PC-3 (cell line): ENCODE measurements at regions of chr11 and their contacts with region 1.

Region 1: DNA sequence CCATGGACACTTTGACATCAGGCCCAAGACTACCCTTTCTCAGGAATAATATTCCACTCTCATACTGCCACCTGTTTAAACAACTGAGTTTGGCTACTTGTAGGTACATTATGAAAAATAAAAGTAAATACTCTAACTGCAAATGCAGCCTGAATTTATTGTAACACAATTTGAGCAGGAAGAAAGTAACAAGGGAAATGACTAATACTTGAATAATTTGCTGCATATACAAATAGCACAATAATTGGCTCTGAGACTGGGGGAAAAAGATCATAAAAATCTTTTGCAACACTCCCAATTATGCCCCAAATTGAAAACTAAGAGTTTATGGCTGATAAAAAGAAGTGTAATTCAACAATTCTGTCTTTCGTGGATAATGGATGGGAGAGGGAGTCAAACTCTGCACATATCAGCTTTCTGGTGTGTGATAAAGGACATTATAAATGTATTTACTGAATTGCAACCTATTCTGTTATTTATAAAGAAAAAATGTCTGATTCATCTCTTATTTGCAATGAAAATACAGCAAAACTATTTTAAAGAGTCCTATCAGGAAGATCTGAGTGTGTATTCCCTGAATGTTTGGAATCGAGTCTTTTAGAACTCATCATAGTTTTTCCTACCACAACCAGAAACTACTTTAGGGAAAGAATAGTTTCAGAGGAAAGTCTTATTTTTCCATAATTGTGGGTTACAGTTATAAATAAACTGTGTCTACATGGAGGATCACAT is 359.0 kb downstream of the JRKL start:
- DNase-seq: peak; percentile 88
- ATAC-seq: peak; percentile 90
- H3K4me3 ChIP-seq: peak overlapping the region; percentile 52
- H3K27ac ChIP-seq: peak overlapping the region; percentile 76
- H3K4me1 ChIP-seq: peaks cover 27% of the 10 kb centered on the region
- H3K27me3 ChIP-seq: no peaks in the 10 kb centered on the region
- CTCF ChIP-seq: no peak; the same call in 1 of the 2 replicates

Region 2: GRCh38 chr11:96680211-96681018 is 68.4 kb before region 1 on chr11:
- CTCF ChIA-PET with region 1: no interaction called
- POLR2A ChIA-PET with region 1: no interaction called
- intact Hi-C with region 1: loop called (anchors 1 kb)
- DNase-seq: peak; percentile 49
- ATAC-seq: peak; percentile 92
- H3K4me3 ChIP-seq: no peak overlapping the region
- H3K27ac ChIP-seq: no peak overlapping the region
- H3K4me1 ChIP-seq: peaks cover 11% of the 10 kb centered on the region
- H3K27me3 ChIP-seq: peaks cover 11% of the 10 kb centered on the region
- CTCF ChIP-seq: no peak

Region 3: DNA sequence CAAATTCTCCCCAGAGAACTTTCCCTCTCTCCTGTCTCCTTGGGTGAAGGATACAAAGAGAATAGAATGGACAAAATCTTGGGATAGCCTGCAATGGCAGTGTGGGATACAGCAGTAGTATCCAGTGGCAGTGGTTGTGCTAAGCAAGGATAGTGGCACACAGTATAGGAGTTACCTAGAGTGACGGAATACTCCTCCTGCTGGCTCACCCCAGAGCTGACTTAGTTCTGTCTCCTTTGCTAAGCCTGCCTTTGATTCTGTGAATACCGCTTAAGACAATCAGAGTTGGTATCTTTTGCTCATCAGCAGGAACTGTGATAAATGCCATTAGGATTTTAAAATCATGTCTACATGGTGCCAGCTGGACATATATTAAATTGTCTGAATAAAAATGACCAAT is 45.3 kb after region 1 on chr11:
- CTCF ChIA-PET with region 1: no interaction called
- POLR2A ChIA-PET with region 1: no interaction called
- intact Hi-C with region 1: loop called (anchors 5 kb)
- DNase-seq: peak; percentile 33
- ATAC-seq: peak; percentile 70
- H3K4me3 ChIP-seq: no peak overlapping the region
- H3K27ac ChIP-seq: no peak overlapping the region
- H3K4me1 ChIP-seq: no peaks in the 10 kb centered on the region
- H3K27me3 ChIP-seq: peaks cover 20% of the 10 kb centered on the region
- CTCF ChIP-seq: peak; percentile 47; the same call in 1 of the 2 replicates